Right cardiac atrium (tissue), 5 donors: ENCODE measurements at regions of chr19 and their contacts with region 1.

Region 1: GRCh38 chr19:35135389-35135909 is 590 bp upstream of the LGI4 start:
- DNase-seq: peak; percentile 84 to 95 (median 95)
- ATAC-seq: peak; percentile 71 to 73
- H3K4me3 ChIP-seq: peak overlapping the region; percentile 49
- H3K27ac ChIP-seq: peak overlapping the region; percentile 59
- H3K4me1 ChIP-seq: no peaks in the 10 kb centered on the region
- H3K27me3 ChIP-seq: no peaks in the 10 kb centered on the region

Region 2: GRCh38 chr19:35066691-35067563 is 68.5 kb before region 1 on chr19:
- intact Hi-C with region 1: loop called in 2 of 4 experiments (anchors 10 kb)
- DNase-seq: peak; percentile 89 to 97 (median 95)
- ATAC-seq: peak; percentile 84 to 90
- H3K4me3 ChIP-seq: no peak overlapping the region
- H3K27ac ChIP-seq: no peak overlapping the region
- H3K4me1 ChIP-seq: no peaks in the 10 kb centered on the region
- H3K27me3 ChIP-seq: no peaks in the 10 kb centered on the region

Region 3: DNA sequence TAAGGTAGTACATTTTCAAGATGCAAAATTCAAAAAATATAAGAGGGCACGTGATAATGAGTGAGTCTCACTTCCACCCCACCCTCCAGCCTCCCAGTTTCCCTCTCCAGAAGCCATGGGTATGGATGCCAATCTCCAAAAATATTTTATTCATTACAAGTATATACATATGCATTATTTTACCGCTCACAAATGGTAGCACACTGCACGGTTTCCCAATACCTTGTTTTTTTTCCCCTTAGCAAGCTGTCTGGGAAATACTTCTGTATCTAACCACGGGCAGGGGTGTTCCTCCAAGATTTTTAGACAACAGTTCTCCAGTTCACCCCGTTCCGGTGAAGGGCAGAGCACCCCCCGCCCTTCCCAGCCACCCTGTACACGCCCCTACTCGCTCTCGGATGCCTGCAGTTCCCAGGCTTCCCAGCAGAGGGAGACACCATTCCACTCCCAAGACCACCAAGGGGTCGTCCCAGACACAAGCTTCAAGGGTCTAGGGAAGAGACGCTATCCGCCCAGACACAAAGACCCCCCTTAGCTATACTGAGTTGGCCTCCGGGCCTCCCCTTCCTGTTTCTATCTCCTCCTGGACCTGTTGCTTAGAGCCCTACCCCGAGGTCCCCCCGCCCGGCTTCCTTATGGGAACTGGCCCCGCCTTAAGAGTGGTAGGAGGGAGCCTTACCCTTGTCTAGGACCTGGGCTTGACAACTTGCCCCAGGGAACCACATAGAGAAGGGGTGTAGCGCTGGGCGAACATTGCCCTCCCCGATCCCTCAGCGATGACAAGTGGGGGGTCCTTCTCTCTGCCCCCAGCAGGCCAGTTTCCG is 20.9 kb before region 1 on chr19:
- intact Hi-C with region 1: loop called in 1 of 4 experiments (anchors 1 kb)
- DNase-seq: peak; percentile 69 to 92 (median 90)
- ATAC-seq: peak; percentile 80 to 82
- H3K4me3 ChIP-seq: peak overlapping the region; percentile 26
- H3K27ac ChIP-seq: no peak overlapping the region
- H3K4me1 ChIP-seq: no peaks in the 10 kb centered on the region
- H3K27me3 ChIP-seq: no peaks in the 10 kb centered on the region

Region 4: DNA sequence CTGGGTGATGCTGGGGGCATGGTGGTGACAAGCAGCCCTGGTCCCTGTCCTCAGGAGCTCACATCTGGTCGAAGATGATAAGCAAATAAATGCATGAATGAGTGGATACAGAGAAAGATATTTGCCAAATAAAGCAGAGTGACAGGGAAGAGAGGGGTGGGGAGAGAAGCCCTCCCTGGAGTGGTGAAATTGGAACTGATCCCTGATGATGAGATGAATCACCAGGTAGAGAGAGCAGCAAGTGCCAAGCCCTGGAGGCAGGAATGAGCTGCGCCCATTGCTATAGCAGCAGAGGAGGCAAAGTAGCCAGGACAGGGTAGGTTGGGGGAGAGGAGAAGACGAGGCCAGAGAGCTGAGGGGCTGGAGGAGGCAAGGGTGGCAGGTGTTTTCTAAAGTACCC is 32.8 kb after region 1 on chr19:
- intact Hi-C with region 1: no loop called
- DNase-seq: no peak
- ATAC-seq: no peak
- H3K4me3 ChIP-seq: no peak overlapping the region
- H3K27ac ChIP-seq: no peak overlapping the region
- H3K4me1 ChIP-seq: no peaks in the 10 kb centered on the region
- H3K27me3 ChIP-seq: no peaks in the 10 kb centered on the region